Endothelial cell of umbilical vein (primary cell): ENCODE measurements at regions of chr1 and their contacts with region 1.

Region 1: DNA sequence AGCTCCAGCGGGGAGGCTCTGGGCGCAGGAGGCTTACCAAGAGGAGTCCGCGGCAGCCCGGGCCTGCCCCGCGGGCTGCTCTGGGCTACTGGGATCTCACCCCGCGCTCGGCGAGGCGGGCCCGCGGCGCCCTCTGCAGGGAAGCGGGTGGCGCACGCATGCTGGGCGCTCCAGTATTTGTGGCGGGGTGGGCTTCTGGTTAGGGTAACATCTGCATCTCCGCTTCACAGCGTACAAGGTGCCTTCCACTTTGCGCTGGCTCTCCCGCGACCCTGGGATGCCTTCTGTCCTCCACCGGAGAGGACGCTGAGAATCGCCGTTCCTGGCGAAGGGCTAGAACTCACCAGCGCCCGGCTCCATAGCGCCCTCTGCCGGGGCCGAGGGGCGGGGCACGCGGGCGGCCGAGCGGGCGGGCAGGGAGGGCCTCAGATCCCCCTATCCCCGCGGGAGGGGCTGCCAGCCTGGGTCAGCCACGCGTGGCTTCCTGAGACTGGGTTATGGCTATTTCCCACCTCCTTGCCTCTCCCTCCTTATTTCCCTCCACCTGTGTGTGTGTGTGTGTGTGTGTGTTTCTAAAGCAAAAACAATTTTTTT is 46.6 kb upstream of the CTBS start:
- DNase-seq: peak; percentile 80
- H3K4me3 ChIP-seq: peak overlapping the region; percentile 33 to 66 (median 38)
- H3K27ac ChIP-seq: peak overlapping the region; percentile 69
- H3K4me1 ChIP-seq: peaks cover 15% of the 10 kb centered on the region
- H3K27me3 ChIP-seq: no peaks in the 10 kb centered on the region
- CTCF ChIP-seq: peak; percentile 65 to 84
- POLR2A ChIP-seq: no peak

Region 2: DNA sequence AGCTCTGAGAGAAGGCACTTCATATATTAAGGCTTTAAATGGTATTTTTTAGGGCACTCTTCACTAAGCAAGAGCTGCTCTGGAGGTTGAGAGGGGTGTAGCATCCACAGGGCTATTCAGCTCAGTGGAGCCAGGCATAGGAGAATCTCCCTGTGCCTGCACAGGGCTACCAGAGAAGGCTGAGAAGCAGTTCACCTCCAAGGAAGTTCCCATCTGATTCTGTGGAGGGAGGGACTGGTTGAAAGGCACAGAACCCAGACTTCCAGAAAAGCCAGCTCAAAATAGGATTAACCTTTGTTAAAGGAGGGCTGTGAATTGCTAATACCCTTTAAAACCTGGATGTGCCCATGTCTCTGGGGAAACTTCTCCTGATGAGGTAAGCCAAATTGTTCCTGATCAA is 926.4 kb before region 1 on chr1:
- CTCF ChIA-PET with region 1: no interaction called
- POLR2A ChIA-PET with region 1: no interaction called
- dilution Hi-C with region 1: no loop called
- intact Hi-C with region 1: no loop called
- DNase-seq: no peak
- H3K4me3 ChIP-seq: no peak overlapping the region
- H3K27ac ChIP-seq: no peak overlapping the region
- H3K4me1 ChIP-seq: peaks cover 11% of the 10 kb centered on the region
- H3K27me3 ChIP-seq: peaks cover 0 to 3% of the 10 kb centered on the region in 2 experiments
- CTCF ChIP-seq: no peak
- POLR2A ChIP-seq: no peak

Region 3: DNA sequence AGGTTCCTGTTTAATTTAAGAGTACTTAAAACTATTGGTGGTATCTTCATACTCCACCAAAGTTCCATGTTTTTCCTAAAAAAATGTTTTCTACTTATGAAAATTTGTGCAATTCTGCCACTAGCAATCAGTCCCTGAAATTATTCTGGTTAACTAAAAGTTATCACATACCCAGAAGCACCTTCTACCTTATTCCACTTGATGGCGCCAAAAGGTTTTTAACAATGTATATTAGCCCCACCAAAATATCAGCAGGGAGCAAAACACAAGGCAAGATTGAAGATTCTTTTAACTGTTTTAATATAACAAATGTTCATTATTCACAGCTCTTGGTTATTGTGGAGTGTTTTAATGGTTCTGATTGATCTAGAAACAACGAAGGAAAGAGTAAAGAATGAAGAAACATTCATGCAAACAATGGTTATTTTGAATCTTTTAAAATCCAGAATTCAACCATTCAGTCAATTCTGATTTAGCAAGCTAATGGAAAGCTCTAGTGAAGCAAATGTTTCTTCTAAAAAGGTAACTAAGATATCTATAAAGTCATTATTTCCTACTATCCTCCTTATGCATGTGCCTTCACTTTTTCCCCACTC is 689.1 kb before region 1 on chr1:
- CTCF ChIA-PET with region 1: no interaction called
- POLR2A ChIA-PET with region 1: no interaction called
- dilution Hi-C with region 1: no loop called
- intact Hi-C with region 1: loop called (anchors 5 kb)
- DNase-seq: peak; percentile 48
- H3K4me3 ChIP-seq: no peak overlapping the region
- H3K27ac ChIP-seq: no peak overlapping the region
- H3K4me1 ChIP-seq: no peaks in the 10 kb centered on the region
- H3K27me3 ChIP-seq: no peaks in the 10 kb centered on the region
- CTCF ChIP-seq: peak; percentile 33 to 42
- POLR2A ChIP-seq: no peak

Region 4: GRCh38 chr1:84433258-84434080 is 187.3 kb before region 1 on chr1:
- CTCF ChIA-PET with region 1: interaction called, 3 read pairs
- POLR2A ChIA-PET with region 1: no interaction called
- dilution Hi-C with region 1: loop called (anchors 25 kb)
- intact Hi-C with region 1: no loop called
- DNase-seq: peak; percentile 81
- H3K4me3 ChIP-seq: peak overlapping the region in 1 of 3 experiments; percentile 52
- H3K27ac ChIP-seq: peak overlapping the region; percentile 69
- H3K4me1 ChIP-seq: peaks cover 5% of the 10 kb centered on the region
- H3K27me3 ChIP-seq: no peaks in the 10 kb centered on the region
- CTCF ChIP-seq: peak; percentile 64 to 67
- POLR2A ChIP-seq: no peak

Region 5: GRCh38 chr1:84573967-84574842 is 46.6 kb before region 1 on chr1 and contains the start of gene CTBS:
- CTCF ChIA-PET with region 1: interaction called, 6 read pairs
- POLR2A ChIA-PET with region 1: interaction called, 3 read pairs
- dilution Hi-C with region 1: no loop called
- intact Hi-C with region 1: loop called (anchors 1 kb)
- DNase-seq: peak; percentile 85
- H3K4me3 ChIP-seq: peak within 1 kb of the TSS; percentile 40 to 69 (median 62)
- H3K27ac ChIP-seq: peak within 1 kb of the TSS; percentile 98
- H3K4me1 ChIP-seq: peaks cover 17% of the 10 kb centered on the region
- H3K27me3 ChIP-seq: no peaks in the 10 kb centered on the region
- CTCF ChIP-seq: no peak
- POLR2A ChIP-seq: peak; percentile 86
- total RNA-seq, gene CTBS: 10.7 and 14.3 TPM in 2 replicates

Region 6: DNA sequence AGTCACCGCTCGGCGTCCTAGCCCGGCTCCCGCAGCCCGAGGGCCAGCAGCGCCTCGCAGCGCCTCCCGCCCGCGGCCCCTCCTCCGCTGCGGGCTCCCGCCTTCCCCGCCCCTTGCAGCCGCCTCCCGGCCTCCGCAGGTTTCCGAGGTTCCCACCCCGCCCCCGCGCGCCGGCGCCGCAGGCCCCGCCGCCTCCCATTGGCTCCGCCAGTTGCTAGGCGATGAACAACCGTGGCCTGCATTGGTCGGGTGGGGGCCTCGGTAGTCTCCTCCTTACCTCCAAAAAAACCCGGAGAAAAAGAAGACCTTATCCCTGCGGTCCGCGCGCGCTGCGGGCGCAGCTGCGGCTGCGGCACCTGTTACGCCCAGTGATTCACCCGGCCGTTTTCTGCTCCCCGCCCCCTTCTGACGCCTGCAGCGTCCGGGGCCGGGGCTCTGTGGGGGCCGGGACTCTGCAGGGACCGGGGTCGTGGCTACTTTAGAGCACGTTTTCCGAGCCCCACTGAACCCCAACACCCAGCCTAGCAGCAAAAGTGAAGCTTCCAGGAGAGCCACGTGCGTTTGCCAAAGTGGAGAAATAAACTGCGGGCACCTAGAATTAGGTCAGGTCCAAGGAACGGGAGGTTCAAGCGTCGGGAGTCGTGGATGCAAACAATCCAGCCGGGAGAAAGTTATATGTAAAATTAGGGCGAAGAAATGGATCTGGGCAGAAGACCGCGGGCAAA is 69.7 kb after region 1 on chr1 and contains the start of gene SSX2IP:
- CTCF ChIA-PET with region 1: interaction called, 4 read pairs
- POLR2A ChIA-PET with region 1: no interaction called
- dilution Hi-C with region 1: no loop called
- intact Hi-C with region 1: loop called (anchors 1 kb)
- DNase-seq: peak; percentile 95
- H3K4me3 ChIP-seq: peak within 1 kb of the TSS; percentile 45 to 71 (median 49)
- H3K27ac ChIP-seq: no peak within 1 kb of the TSS
- H3K4me1 ChIP-seq: peaks cover 9% of the 10 kb centered on the region
- H3K27me3 ChIP-seq: no peaks in the 10 kb centered on the region
- CTCF ChIP-seq: no peak
- POLR2A ChIP-seq: no peak
- total RNA-seq, gene SSX2IP: 6.9 and 8.4 TPM in 2 replicates

Region 7: GRCh38 chr1:84936116-84936810 is 315.4 kb after region 1 on chr1:
- CTCF ChIA-PET with region 1: interaction called, 3 read pairs
- POLR2A ChIA-PET with region 1: no interaction called
- dilution Hi-C with region 1: no loop called
- intact Hi-C with region 1: loop called (anchors 5 kb)
- DNase-seq: peak; percentile 57
- H3K4me3 ChIP-seq: no peak overlapping the region
- H3K27ac ChIP-seq: no peak overlapping the region
- H3K4me1 ChIP-seq: peaks cover 5% of the 10 kb centered on the region
- H3K27me3 ChIP-seq: peaks cover 17 to 36% of the 10 kb centered on the region in 2 experiments
- CTCF ChIP-seq: peak; percentile 71 to 77
- POLR2A ChIP-seq: no peak

Region 8: GRCh38 chr1:85116856-85117255 is 496.0 kb after region 1 on chr1:
- CTCF ChIA-PET with region 1: no interaction called
- POLR2A ChIA-PET with region 1: no interaction called
- dilution Hi-C with region 1: no loop called
- intact Hi-C with region 1: no loop called
- DNase-seq: no peak
- H3K4me3 ChIP-seq: no peak overlapping the region
- H3K27ac ChIP-seq: no peak overlapping the region
- H3K4me1 ChIP-seq: no peaks in the 10 kb centered on the region
- H3K27me3 ChIP-seq: peaks cover 0 to 5% of the 10 kb centered on the region in 2 experiments
- CTCF ChIP-seq: no peak
- POLR2A ChIP-seq: no peak